Cardiac septum (tissue), 1 donor: ENCODE measurements at regions of chr17 and their contacts with region 1.

Region 1: GRCh38 chr17:38454516-38454915 is 26.3 kb downstream of the ARHGAP23 start:
- DNase-seq: peak; percentile 92

Region 2: GRCh38 chr17:38464723-38465390 is 10.3 kb after region 1 on chr17:
- intact Hi-C with region 1: loop called (anchors 1 kb)
- DNase-seq: peak; percentile 93